ENCODE measurements at regions of chr12 and their contacts with region 1.

Region 1: DNA sequence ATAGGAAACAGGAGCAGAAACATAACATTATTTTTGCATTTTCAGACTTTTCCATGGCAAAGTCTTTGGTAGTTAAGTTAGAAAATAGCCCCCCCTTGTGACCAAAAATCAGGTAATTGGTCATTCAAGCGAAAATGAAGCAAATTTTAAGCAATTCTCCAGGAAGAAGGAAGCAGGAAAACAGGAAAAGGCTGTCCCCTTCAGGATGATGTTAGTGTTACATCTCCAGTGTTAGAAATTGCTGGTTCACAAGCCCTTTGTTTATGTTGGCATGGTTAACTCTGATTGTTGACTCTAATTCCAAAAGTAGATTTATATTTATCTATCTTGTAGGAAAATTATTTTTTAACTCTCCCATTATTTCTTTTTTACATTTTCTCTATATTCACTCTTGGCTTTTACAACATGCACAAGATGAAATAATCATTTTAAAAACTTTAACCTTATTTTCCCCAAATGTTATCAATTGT is 18.8 kb upstream of the GAS2L3 start:
- DNase-seq: peak; percentile 96
- H3K4me3 ChIP-seq: no peak overlapping the region
- H3K27ac ChIP-seq: no peak overlapping the region
- H3K4me1 ChIP-seq: peaks cover 3% of the 10 kb centered on the region
- H3K27me3 ChIP-seq: peaks cover 2% of the 10 kb centered on the region in 2 experiments
- CTCF ChIP-seq: peak; percentile 66
- POLR2A ChIP-seq: no peak

Region 2: DNA sequence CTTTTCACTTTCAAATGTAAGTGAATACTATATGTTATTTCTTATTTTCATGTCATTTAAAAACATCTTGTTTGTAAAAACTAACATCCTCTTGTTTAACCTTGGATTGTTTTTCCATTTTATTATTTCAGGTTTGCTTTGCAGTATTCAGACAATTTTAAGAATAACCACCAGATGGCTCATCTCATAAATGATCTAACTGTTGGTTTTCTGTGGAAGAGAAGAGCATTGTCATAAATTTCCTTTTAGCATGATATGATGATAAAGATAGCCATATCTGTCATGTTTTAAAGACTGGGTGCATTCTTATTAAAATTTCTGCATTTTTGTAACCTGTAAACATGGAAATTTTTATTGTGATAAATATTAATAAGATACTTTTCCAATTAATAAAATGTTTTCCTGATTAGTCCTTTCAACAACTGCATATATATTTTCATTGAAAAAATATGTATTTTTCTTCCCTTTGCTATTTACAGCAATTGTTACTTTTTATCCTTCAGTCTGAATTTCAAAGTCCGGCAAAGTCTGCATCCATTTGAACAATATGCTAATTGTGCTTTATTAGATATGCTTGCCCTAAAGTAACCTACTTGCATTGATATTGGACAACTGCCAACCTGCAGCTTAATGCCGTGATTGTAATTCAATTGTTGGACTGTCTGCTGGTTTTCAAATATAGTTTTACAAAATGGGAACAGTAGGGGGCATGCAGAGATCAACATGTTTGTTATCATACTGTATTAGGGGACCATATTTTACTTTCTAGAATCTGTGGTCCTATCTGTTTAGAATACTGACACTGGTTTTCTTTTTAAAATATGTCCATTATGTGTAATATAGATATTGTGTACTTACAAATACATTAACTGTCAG is 743.7 kb before region 1 on chr12:
- CTCF ChIA-PET with region 1: interaction called, 3 read pairs
- POLR2A ChIA-PET with region 1: no interaction called
- dilution Hi-C with region 1: no loop called
- intact Hi-C with region 1: loop called (anchors 1 kb)
- DNase-seq: peak; percentile 57
- H3K4me3 ChIP-seq: no peak overlapping the region
- H3K27ac ChIP-seq: no peak overlapping the region
- H3K4me1 ChIP-seq: no peaks in the 10 kb centered on the region
- H3K27me3 ChIP-seq: peaks cover 0 to 2% of the 10 kb centered on the region in 2 experiments
- CTCF ChIP-seq: no peak
- POLR2A ChIP-seq: no peak

Region 3: DNA sequence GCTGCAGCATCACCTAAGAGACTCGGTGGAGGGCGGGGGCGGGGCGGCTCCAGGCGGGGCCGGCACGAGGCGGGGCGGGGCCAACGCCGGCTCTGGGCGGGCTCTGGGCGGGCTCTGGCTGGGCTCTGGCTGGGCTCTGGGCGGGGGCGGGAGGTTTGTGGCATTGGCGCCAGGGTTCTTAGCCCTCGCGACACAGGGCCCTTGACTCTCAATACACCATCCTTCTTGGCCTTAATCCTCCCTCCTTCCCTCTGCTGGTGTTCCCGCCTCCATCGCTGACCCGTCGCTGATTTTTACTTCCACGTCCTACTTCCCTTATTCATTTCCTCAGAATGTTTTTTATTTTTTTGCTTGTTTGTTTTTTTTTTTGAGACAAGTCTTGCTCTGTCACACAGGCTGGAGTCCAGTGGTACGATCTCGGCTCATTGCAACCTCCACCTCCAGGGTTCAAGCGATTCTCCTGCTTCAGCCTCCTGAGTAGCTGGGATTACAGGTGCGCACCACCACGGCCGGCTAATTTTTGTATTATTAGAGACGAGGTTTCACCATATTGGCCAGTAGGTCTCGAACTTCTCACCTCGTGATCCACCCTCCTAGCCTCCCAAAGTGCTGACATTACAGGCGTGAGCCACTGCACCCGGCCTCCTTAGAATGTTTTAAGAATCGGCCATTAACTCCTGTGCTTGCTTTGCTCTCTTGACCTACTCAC is 411.6 kb before region 1 on chr12 and contains the start of gene BLTP3B:
- CTCF ChIA-PET with region 1: interaction called, 3 read pairs
- POLR2A ChIA-PET with region 1: no interaction called
- dilution Hi-C with region 1: no loop called
- intact Hi-C with region 1: loop called (anchors 2 kb)
- DNase-seq: peak; percentile 78
- H3K4me3 ChIP-seq: peak within 1 kb of the TSS; percentile 64 to 97 (median 74)
- H3K27ac ChIP-seq: peak within 1 kb of the TSS; percentile 91
- H3K4me1 ChIP-seq: peaks cover 5% of the 10 kb centered on the region
- H3K27me3 ChIP-seq: no peaks in the 10 kb centered on the region
- CTCF ChIP-seq: no peak
- POLR2A ChIP-seq: peak; percentile 53
- total RNA-seq, gene BLTP3B: 16.0 and 17.9 TPM in 2 replicates

Region 4: DNA sequence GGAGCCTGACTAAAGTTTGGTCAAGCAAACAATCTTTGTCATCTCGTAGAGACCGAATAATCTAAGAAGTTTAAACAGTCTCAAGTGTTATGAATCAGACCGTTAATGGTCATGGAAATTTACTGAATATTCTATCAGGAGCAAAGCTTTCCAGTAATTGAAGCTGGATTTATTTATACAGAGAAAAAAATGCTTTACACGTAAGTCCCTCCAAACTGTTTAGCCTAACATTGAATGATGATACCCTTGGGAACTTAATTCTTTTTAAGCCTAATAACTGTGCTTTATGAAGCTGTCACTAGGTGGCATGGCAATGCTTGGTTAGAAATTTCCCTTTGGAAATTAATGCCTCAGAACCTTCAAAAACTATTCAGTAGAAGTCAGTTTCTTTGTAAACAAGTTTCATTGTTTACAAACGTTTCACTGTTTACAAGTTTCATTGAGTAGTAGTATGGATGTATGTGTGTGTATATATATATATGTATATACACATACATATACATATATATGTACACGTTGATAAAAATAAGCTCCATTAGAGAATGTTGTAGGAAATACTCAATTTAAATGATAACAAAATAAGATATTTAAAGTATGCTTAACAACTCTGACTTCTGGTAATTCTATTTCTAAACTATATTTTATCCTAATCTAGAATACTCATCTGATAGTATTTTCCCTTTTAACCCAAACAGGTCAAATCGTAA is 319.9 kb before region 1 on chr12:
- CTCF ChIA-PET with region 1: interaction called, 63 read pairs
- POLR2A ChIA-PET with region 1: no interaction called
- dilution Hi-C with region 1: no loop called
- intact Hi-C with region 1: loop called (anchors 1 kb)
- DNase-seq: peak; percentile 58
- H3K4me3 ChIP-seq: no peak overlapping the region
- H3K27ac ChIP-seq: no peak overlapping the region
- H3K4me1 ChIP-seq: no peaks in the 10 kb centered on the region
- H3K27me3 ChIP-seq: no peaks in the 10 kb centered on the region
- CTCF ChIP-seq: peak; percentile 52 to 53
- POLR2A ChIP-seq: no peak

Region 5: GRCh38 chr12:100573292-100574186 is 18.9 kb after region 1 on chr12 and contains the start of gene GAS2L3:
- CTCF ChIA-PET with region 1: interaction called, 5 read pairs
- POLR2A ChIA-PET with region 1: no interaction called
- dilution Hi-C with region 1: no loop called
- intact Hi-C with region 1: loop called (anchors 1 kb)
- DNase-seq: peak; percentile 93
- H3K4me3 ChIP-seq: peak within 1 kb of the TSS; percentile 24 to 89 (median 87)
- H3K27ac ChIP-seq: peak within 1 kb of the TSS; percentile 79
- H3K4me1 ChIP-seq: peaks cover 34% of the 10 kb centered on the region
- H3K27me3 ChIP-seq: peaks cover 1 to 2% of the 10 kb centered on the region in 2 experiments
- CTCF ChIP-seq: no peak
- POLR2A ChIP-seq: peak; percentile 40
- total RNA-seq, gene GAS2L3: 39.9 and 47.1 TPM in 2 replicates

Region 6: GRCh38 chr12:100741084-100741711 is 186.6 kb after region 1 on chr12:
- CTCF ChIA-PET with region 1: no interaction called
- POLR2A ChIA-PET with region 1: no interaction called
- dilution Hi-C with region 1: no loop called
- intact Hi-C with region 1: loop called (anchors 10 kb)
- DNase-seq: peak; percentile 44
- H3K4me3 ChIP-seq: no peak overlapping the region
- H3K27ac ChIP-seq: no peak overlapping the region
- H3K4me1 ChIP-seq: no peaks in the 10 kb centered on the region
- H3K27me3 ChIP-seq: no peaks in the 10 kb centered on the region
- CTCF ChIP-seq: peak; percentile 52 to 60
- POLR2A ChIP-seq: no peak